CD4-positive, alpha-beta memory T cell (primary cell): ENCODE measurements at regions of chr10 and their contacts with region 1.

Region 1: DNA sequence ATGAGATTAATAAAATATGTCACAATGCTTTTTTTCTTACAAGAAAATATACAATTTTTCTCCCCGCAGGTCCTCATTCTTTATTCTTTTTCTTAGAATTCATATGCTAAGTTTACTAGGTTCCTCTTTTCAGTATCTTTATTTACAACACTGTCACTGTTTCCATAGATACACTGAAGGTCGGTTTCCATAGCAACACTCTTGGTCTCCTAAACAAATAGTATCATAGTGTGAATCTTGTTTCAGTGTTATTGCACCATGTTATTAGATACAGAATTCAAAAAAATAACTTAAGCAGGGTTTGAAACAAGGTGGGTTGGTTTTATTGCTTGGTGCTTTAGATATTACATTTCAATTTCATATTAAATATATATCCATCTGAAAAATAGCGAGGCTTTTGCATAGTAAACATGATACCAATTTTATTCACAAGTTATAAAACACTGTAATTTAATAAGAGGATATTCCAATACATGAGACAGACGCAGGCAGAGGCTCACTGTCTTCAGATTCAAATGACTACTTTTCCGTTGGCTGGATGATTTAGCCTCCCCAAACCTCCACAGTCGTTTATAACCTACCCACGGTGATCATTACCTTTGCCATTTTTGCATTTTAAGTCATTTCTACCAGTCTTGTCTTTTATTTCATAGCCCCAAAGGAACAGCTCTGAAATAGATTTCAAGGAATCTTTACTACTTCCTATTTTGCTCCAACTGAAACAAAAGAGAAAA is 88.9 kb upstream of the KLF6 start:
- DNase-seq: peak; percentile 67 to 93 (median 90)
- H3K4me3 ChIP-seq: no peak overlapping the region
- H3K4me3 Mint-ChIP-seq: peak overlapping the region; percentile 9 to 72 (median 63)
- H3K27ac ChIP-seq: peak overlapping the region; percentile 94
- H3K27ac Mint-ChIP-seq: peak overlapping the region; percentile 96 to 100 (median 99)
- H3K4me1 ChIP-seq: peaks cover 68% of the 10 kb centered on the region
- H3K4me1 Mint-ChIP-seq: peaks cover 49 to 76% (median 66%) of the 10 kb centered on the region in 4 donors
- H3K27me3 ChIP-seq: no peaks in the 10 kb centered on the region
- H3K27me3 Mint-ChIP-seq: no peaks in the 10 kb centered on the region

Region 2: GRCh38 chr10:3668276-3668965 is 205.5 kb before region 1 on chr10:
- CTCF ChIA-PET with region 1: no interaction called
- POLR2A ChIA-PET with region 1: no interaction called
- intact Hi-C with region 1: loop called (anchors 2 kb)
- DNase-seq: peak; percentile 83 to 89 (median 85)
- H3K4me3 ChIP-seq: peak overlapping the region; percentile 65 to 92
- H3K4me3 Mint-ChIP-seq: peak overlapping the region; percentile 86 to 96 (median 92)
- H3K27ac ChIP-seq: peak overlapping the region; percentile 67
- H3K27ac Mint-ChIP-seq: peak overlapping the region; percentile 96 to 98 (median 97)
- H3K4me1 ChIP-seq: peaks cover 44% of the 10 kb centered on the region
- H3K4me1 Mint-ChIP-seq: peaks cover 32 to 58% (median 43%) of the 10 kb centered on the region in 4 donors
- H3K27me3 ChIP-seq: no peaks in the 10 kb centered on the region
- H3K27me3 Mint-ChIP-seq: no peaks in the 10 kb centered on the region

Region 3: GRCh38 chr10:3805791-3806461 is 68.0 kb before region 1 on chr10:
- CTCF ChIA-PET with region 1: interaction called, 6 read pairs
- POLR2A ChIA-PET with region 1: interaction called, 189 read pairs
- intact Hi-C with region 1: loop called (anchors 1 kb)
- DNase-seq: peak; percentile 42 to 84 (median 55)
- H3K4me3 ChIP-seq: peak overlapping the region; percentile 2 to 41
- H3K4me3 Mint-ChIP-seq: peak overlapping the region in 7 of 8 donors; percentile 38 to 85 (median 76)
- H3K27ac ChIP-seq: peak overlapping the region; percentile 99
- H3K27ac Mint-ChIP-seq: no peak overlapping the region
- H3K4me1 ChIP-seq: peaks cover 98% of the 10 kb centered on the region
- H3K4me1 Mint-ChIP-seq: peaks cover 4 to 75% (median 69%) of the 10 kb centered on the region in 4 donors
- H3K27me3 ChIP-seq: no peaks in the 10 kb centered on the region
- H3K27me3 Mint-ChIP-seq: no peaks in the 10 kb centered on the region

Region 4: DNA sequence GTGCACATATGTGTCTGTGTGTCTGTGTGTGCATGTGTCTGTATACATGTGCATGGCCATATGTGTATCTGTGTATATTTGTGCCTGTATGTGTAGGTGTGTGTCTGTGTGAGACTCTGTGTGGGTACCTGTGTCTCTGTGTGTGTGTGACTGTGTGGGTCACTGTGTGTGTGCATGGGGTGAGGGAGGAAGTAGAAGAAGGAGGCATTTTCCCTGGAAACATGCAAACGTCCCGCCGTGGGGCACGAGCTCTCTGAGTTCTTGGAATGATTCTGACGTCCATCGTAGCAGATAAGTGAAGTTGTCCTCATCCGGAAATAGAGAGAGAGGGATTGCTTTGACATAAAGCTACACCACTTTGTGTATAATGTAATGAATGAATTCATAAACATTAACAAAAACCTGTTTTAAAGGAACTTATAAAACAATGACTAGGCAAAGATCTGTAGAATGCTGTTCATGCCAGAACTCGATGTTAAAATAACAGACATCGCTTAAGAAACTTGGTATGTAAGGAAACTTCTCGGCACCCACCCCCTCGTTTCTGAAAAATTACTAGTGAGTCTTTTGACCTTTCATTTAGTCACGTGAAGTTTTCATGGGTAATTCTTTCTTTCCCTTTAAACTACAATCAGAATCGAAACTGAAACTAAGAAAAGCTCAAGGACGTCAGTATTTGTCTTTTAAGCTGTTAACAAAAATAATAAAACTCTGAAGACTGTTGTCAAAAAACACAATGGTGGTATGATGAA is 45.3 kb before region 1 on chr10:
- CTCF ChIA-PET with region 1: interaction called, 5 read pairs
- POLR2A ChIA-PET with region 1: interaction called, 18 read pairs
- intact Hi-C with region 1: loop called (anchors 2 kb)
- DNase-seq: peak; percentile 53 to 70 (median 62)
- H3K4me3 ChIP-seq: peak overlapping the region; percentile 32 to 55
- H3K4me3 Mint-ChIP-seq: peak overlapping the region; percentile 85 to 91 (median 88)
- H3K27ac ChIP-seq: peak overlapping the region; percentile 78
- H3K27ac Mint-ChIP-seq: peak overlapping the region; percentile 84 to 98 (median 95)
- H3K4me1 ChIP-seq: peaks cover 21% of the 10 kb centered on the region
- H3K4me1 Mint-ChIP-seq: peaks cover 21 to 43% (median 33%) of the 10 kb centered on the region in 4 donors
- H3K27me3 ChIP-seq: no peaks in the 10 kb centered on the region
- H3K27me3 Mint-ChIP-seq: no peaks in the 10 kb centered on the region

Region 5: GRCh38 chr10:3887885-3888476 is 14.1 kb after region 1 on chr10:
- CTCF ChIA-PET with region 1: interaction called, 8 read pairs
- POLR2A ChIA-PET with region 1: interaction called, 158 read pairs
- intact Hi-C with region 1: loop called (anchors 1 kb)
- DNase-seq: peak; percentile 70 to 94 (median 74)
- H3K4me3 ChIP-seq: no peak overlapping the region
- H3K4me3 Mint-ChIP-seq: peak overlapping the region; percentile 62 to 82 (median 70)
- H3K27ac ChIP-seq: peak overlapping the region; percentile 77
- H3K27ac Mint-ChIP-seq: peak overlapping the region; percentile 91 to 99 (median 98)
- H3K4me1 ChIP-seq: peaks cover 53% of the 10 kb centered on the region
- H3K4me1 Mint-ChIP-seq: peaks cover 23 to 68% (median 49%) of the 10 kb centered on the region in 4 donors
- H3K27me3 ChIP-seq: no peaks in the 10 kb centered on the region
- H3K27me3 Mint-ChIP-seq: no peaks in the 10 kb centered on the region

Region 6: DNA sequence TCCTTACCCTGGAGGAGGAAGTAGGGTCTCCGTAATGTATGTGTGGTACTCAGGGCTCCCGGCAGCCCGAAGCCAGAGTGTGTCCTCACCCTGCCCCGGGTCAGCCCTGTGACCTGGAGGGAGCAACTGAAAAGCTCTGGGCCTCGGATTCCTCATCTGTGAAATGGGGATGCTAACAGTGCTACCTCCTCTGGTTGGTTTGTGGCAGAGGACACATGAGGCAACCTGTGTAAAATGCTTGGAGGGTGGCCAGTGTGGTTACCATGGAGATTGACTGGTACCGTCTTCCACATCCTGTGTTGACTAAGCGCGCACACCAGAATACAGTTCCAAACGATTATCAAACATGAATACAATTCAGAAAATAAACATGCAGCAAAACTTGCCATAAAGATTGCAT is 74.9 kb after region 1 on chr10:
- CTCF ChIA-PET with region 1: no interaction called
- POLR2A ChIA-PET with region 1: interaction called, 14 read pairs
- intact Hi-C with region 1: loop called (anchors 2 kb)
- DNase-seq: peak; percentile 83 to 93 (median 88)
- H3K4me3 ChIP-seq: no peak overlapping the region
- H3K4me3 Mint-ChIP-seq: peak overlapping the region; percentile 64 to 85 (median 83)
- H3K27ac ChIP-seq: peak overlapping the region; percentile 52
- H3K27ac Mint-ChIP-seq: peak overlapping the region; percentile 93 to 98 (median 97)
- H3K4me1 ChIP-seq: peaks cover 67% of the 10 kb centered on the region
- H3K4me1 Mint-ChIP-seq: peaks cover 43 to 80% (median 59%) of the 10 kb centered on the region in 4 donors
- H3K27me3 ChIP-seq: no peaks in the 10 kb centered on the region
- H3K27me3 Mint-ChIP-seq: no peaks in the 10 kb centered on the region

Region 7: DNA sequence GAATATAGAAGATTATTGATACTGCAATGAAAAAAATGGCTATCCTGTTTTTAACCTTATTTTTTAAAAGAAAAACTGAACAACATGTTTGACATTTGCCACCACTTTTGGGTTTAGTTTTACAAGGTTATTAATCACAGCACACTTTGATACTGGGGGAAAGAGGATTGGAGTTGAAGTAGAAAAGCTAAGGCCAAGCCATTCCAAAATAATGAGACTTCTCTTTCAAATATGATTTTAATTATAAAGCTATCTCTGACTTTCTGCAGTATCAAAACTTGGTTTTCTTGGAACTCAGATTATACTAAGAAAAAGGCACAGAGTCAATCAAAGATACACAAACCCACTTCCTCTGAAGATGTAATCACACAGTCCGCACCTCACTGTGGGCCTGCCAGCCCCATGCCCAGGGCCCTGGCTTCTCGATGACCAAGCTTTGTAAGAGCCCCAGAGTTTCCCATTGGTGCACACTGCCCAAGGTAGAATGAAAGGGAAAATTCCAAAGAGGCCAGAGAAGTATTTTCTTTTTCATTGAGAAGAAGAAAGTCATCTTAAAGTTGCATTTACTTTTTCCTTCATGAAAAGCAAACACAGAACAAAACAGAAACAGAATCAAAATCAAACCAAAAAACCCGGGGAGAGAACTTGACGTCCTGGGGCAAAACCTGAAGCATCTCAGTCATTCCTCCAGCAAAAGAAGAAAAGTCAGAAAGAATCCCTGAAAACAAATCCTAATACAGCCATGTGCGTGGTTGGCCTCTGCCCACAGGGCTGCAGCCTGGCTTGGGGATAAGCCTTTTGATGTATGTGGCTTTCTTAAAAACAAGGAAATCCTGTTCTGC is 98.8 kb after region 1 on chr10:
- CTCF ChIA-PET with region 1: no interaction called
- POLR2A ChIA-PET with region 1: interaction called, 13 read pairs
- intact Hi-C with region 1: loop called (anchors 5 kb)
- DNase-seq: peak in 4 of 5 donors; percentile 26 to 62 (median 44)
- H3K4me3 ChIP-seq: no peak overlapping the region
- H3K4me3 Mint-ChIP-seq: peak overlapping the region; percentile 72 to 95 (median 84)
- H3K27ac ChIP-seq: peak overlapping the region; percentile 70
- H3K27ac Mint-ChIP-seq: peak overlapping the region; percentile 88 to 98 (median 96)
- H3K4me1 ChIP-seq: peaks cover 85% of the 10 kb centered on the region
- H3K4me1 Mint-ChIP-seq: peaks cover 44 to 61% (median 53%) of the 10 kb centered on the region in 4 donors
- H3K27me3 ChIP-seq: no peaks in the 10 kb centered on the region
- H3K27me3 Mint-ChIP-seq: no peaks in the 10 kb centered on the region